ENCODE measurements at regions of chr14 and their contacts with region 1.

Region 1: GRCh38 chr14:102086972-102087761 is at the start of gene HSP90AA1:
- DNase-seq: peak; percentile 95
- H3K4me3 Mint-ChIP-seq: peak within 1 kb of the TSS; percentile 97
- H3K27ac Mint-ChIP-seq: peak within 1 kb of the TSS; percentile 93
- H3K4me1 Mint-ChIP-seq: peaks cover 55% of the 10 kb centered on the region
- H3K27me3 Mint-ChIP-seq: no peaks in the 10 kb centered on the region
- total RNA-seq, gene HSP90AA1: 466 to 472 TPM

Region 2: GRCh38 chr14:101814934-101815333 is 272.2 kb before region 1 on chr14:
- CTCF ChIA-PET with region 1: interaction called, 3 read pairs
- POLR2A ChIA-PET with region 1: interaction called, 11 read pairs
- DNase-seq: no peak
- H3K4me3 Mint-ChIP-seq: peak overlapping the region; percentile 83
- H3K27ac Mint-ChIP-seq: peak overlapping the region; percentile 96
- H3K4me1 Mint-ChIP-seq: peaks cover 79% of the 10 kb centered on the region
- H3K27me3 Mint-ChIP-seq: no peaks in the 10 kb centered on the region

Region 3: GRCh38 chr14:101964297-101965144 is 122.6 kb before region 1 on chr14 and contains the start of gene DYNC1H1:
- CTCF ChIA-PET with region 1: interaction called, 4 read pairs
- POLR2A ChIA-PET with region 1: interaction called, 16 read pairs
- DNase-seq: peak; percentile 92
- H3K4me3 Mint-ChIP-seq: peak within 1 kb of the TSS; percentile 92
- H3K27ac Mint-ChIP-seq: peak within 1 kb of the TSS; percentile 89
- H3K4me1 Mint-ChIP-seq: peaks cover 43% of the 10 kb centered on the region
- H3K27me3 Mint-ChIP-seq: peaks cover 4% of the 10 kb centered on the region
- total RNA-seq, gene DYNC1H1: 223 to 241 TPM

Region 4: DNA sequence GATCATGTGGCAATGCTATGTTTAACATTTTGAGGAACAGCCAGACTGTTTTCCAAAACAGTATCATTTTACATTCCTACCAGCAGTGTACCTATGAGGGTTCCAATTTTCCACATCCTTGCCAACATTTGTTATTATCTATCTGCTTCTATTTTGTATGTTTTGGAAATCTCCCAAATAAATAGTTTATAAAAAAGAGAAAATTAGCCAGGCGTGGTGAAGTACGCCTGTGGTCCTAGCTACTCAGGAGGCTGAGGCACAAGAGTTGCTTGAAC is 12.5 kb before region 1 on chr14:
- CTCF ChIA-PET with region 1: interaction called, 3 read pairs
- POLR2A ChIA-PET with region 1: interaction called, 11 read pairs
- DNase-seq: no peak
- H3K4me3 Mint-ChIP-seq: no peak overlapping the region
- H3K27ac Mint-ChIP-seq: no peak overlapping the region
- H3K4me1 Mint-ChIP-seq: peaks cover 3% of the 10 kb centered on the region
- H3K27me3 Mint-ChIP-seq: no peaks in the 10 kb centered on the region

Region 5: GRCh38 chr14:102187058-102187457 is 99.9 kb after region 1 on chr14:
- CTCF ChIA-PET with region 1: no interaction called
- POLR2A ChIA-PET with region 1: no interaction called
- DNase-seq: no peak
- H3K4me3 Mint-ChIP-seq: no peak overlapping the region
- H3K27ac Mint-ChIP-seq: no peak overlapping the region
- H3K4me1 Mint-ChIP-seq: peaks cover 30% of the 10 kb centered on the region
- H3K27me3 Mint-ChIP-seq: no peaks in the 10 kb centered on the region

Measured in activated CD4-positive, alpha-beta memory T cell treated with anti-CD3 and anti-CD28 coated beads, Interleukin-2, amount 10 ng/mL, durations not matched to agents 7 days and 5 days (primary cell).